ENCODE measurements at regions of chr15 and their contacts with region 1.

Region 1: GRCh38 chr15:95018888-95019545 is 787.7 kb downstream of the MCTP2 start:
- DNase-seq: no peak
- ATAC-seq: no peak
- H3K4me3 Mint-ChIP-seq: no peak overlapping the region
- H3K27ac Mint-ChIP-seq: no peak overlapping the region
- H3K4me1 Mint-ChIP-seq: no peaks in the 10 kb centered on the region
- H3K27me3 Mint-ChIP-seq: no peaks in the 10 kb centered on the region
- CTCF ChIP-seq: no peak

Region 2: GRCh38 chr15:95032156-95032555 is 13.1 kb after region 1 on chr15:
- CTCF ChIA-PET with region 1: no interaction called
- POLR2A ChIA-PET with region 1: no interaction called
- intact Hi-C with region 1: no loop called
- DNase-seq: no peak
- ATAC-seq: no peak
- H3K4me3 Mint-ChIP-seq: no peak overlapping the region
- H3K27ac Mint-ChIP-seq: no peak overlapping the region
- H3K4me1 Mint-ChIP-seq: no peaks in the 10 kb centered on the region
- H3K27me3 Mint-ChIP-seq: no peaks in the 10 kb centered on the region
- CTCF ChIP-seq: no peak

Region 3: GRCh38 chr15:95078003-95078402 is 59.0 kb after region 1 on chr15:
- CTCF ChIA-PET with region 1: no interaction called
- POLR2A ChIA-PET with region 1: no interaction called
- intact Hi-C with region 1: loop called (anchors 10 kb)
- DNase-seq: no peak
- ATAC-seq: no peak
- H3K4me3 Mint-ChIP-seq: no peak overlapping the region
- H3K27ac Mint-ChIP-seq: no peak overlapping the region
- H3K4me1 Mint-ChIP-seq: no peaks in the 10 kb centered on the region
- H3K27me3 Mint-ChIP-seq: no peaks in the 10 kb centered on the region
- CTCF ChIP-seq: no peak